Activated T-helper 1 cell treated with anti-CD3 and anti-CD28 coated beads, Interleukin-12 subunit alpha, Interleukin-12 subunit beta, Interleukin-2, Interleukin-4 antibody, amounts not matched to agents 30 ng/mL and 10 ng/mL and 1 ng/mL, durations not matched to agents 14 hours and 24 hours and 36 hours (primary cell): ENCODE measurements at regions of chr14 and their contacts with region 1.

Region 1: DNA sequence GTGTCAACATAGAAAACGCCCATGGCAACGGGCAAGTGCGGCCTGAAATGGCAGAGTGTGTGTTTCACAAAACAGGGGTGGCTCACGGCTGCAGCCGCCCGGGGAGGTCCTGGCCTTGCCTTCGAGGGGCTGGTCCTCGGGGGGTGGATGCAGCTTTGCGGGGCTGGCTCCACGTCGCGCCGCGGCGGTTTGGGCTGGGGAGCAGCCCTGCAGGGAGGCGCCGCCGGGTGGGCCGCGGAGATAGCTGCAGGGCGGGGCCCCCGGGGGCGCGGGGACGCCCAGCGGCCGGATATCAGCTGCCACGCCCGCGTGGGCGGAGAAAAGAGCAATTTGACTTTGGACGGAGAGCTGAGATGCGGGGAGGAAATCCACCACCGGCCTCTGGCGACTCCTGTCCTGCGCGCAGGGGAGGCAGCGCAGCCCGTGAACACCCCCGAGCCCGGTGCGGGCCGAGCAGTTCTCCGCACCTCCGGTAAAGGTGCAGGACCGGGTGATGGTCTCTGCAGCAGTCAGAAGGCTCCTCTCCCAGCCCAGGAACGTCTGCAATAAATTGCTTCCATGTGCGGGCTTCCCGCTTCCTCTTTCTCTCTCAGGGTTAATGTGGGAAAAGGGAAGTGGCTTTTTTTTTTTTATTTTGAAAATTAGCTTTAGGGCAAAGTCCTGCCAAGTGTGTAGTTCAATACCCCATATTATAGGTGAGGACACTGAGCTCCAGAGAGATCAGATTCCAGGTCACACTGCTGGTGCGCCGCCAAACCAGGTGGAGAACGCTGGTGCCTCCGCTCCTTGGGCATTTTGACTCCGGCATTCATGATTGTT is 110.5 kb downstream of the ARF6 start:
- DNase-seq: peak; percentile 81
- H3K4me3 Mint-ChIP-seq: peak overlapping the region; percentile 88
- H3K27ac Mint-ChIP-seq: peak overlapping the region; percentile 98
- H3K4me1 Mint-ChIP-seq: peaks cover 68% of the 10 kb centered on the region
- H3K27me3 Mint-ChIP-seq: no peaks in the 10 kb centered on the region

Region 2: DNA sequence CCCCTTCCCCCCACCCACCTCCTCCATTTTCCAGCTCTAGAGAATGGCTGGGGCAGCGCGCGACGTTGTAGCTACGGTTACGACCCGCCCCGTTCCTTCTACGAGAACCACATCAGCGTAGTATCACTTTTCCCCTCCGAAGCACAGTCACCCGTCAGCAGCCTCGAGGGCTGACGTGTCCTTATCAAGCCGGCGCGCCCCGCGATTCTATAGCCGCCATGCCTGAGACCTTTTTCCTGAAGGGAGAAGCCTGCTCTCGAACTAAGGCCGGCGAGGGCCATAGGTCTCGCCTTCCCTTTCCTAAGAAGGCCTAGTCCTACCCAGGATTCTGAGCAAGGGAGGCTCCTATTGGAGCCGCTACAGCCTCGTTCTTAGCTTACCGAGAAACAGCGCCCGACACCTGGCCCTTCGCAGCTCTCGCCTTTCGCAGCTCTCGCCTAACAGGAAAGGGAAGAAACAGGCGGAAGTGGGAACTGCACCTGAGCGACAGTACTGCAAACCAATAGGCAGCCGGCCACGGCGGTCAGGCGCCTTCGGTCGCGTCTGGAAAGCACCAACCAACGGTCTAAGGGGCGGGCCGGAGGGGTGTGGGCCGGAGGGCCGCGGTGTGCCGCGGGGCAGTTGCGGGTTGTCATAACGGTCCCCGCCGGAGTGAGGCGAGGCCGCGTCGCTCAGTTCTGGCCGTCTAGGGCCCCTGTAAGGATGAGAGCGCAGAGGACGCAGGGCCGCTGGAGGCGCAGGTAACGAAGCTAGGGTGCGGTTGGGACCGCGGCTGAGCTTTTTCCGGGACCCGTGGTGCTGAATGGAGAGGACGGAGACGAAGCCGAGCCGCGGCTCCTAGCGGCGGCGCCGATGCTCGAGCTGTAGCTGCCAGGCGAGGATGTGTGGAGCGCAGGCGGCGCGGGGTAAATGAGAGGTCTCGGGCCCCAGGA is 383.0 kb before region 1 on chr14 and contains the starts of genes MGAT2 and RPL36AL:
- intact Hi-C with region 1: loop called (anchors 5 kb)
- DNase-seq: peak; percentile 96
- H3K4me3 Mint-ChIP-seq: peak within 1 kb of the TSS; percentile 98
- H3K27ac Mint-ChIP-seq: peak within 1 kb of the TSS; percentile 98
- H3K4me1 Mint-ChIP-seq: peaks cover 53% of the 10 kb centered on the region
- H3K27me3 Mint-ChIP-seq: peaks cover 2% of the 10 kb centered on the region
- total RNA-seq, gene MGAT2: 57.5 and 58.3 TPM in 2 replicates
- total RNA-seq, gene RPL36AL: 224 and 237 TPM in 2 replicates

Region 3: GRCh38 chr14:49892636-49893308 is 110.7 kb before region 1 on chr14 and contains the start of gene ARF6:
- intact Hi-C with region 1: loop called (anchors 2 kb)
- DNase-seq: peak; percentile 97
- H3K4me3 Mint-ChIP-seq: peak within 1 kb of the TSS; percentile 99
- H3K27ac Mint-ChIP-seq: peak within 1 kb of the TSS; percentile 100
- H3K4me1 Mint-ChIP-seq: peaks cover 19% of the 10 kb centered on the region
- H3K27me3 Mint-ChIP-seq: peaks cover 2% of the 10 kb centered on the region
- total RNA-seq, gene ARF6: 163 and 164 TPM in 2 replicates

Region 4: GRCh38 chr14:49971156-49972130 is 32.0 kb before region 1 on chr14:
- intact Hi-C with region 1: loop called (anchors 1 kb)
- DNase-seq: peak; percentile 48
- H3K4me3 Mint-ChIP-seq: peak overlapping the region; percentile 83
- H3K27ac Mint-ChIP-seq: peak overlapping the region; percentile 99
- H3K4me1 Mint-ChIP-seq: peaks cover 61% of the 10 kb centered on the region
- H3K27me3 Mint-ChIP-seq: no peaks in the 10 kb centered on the region

Region 5: DNA sequence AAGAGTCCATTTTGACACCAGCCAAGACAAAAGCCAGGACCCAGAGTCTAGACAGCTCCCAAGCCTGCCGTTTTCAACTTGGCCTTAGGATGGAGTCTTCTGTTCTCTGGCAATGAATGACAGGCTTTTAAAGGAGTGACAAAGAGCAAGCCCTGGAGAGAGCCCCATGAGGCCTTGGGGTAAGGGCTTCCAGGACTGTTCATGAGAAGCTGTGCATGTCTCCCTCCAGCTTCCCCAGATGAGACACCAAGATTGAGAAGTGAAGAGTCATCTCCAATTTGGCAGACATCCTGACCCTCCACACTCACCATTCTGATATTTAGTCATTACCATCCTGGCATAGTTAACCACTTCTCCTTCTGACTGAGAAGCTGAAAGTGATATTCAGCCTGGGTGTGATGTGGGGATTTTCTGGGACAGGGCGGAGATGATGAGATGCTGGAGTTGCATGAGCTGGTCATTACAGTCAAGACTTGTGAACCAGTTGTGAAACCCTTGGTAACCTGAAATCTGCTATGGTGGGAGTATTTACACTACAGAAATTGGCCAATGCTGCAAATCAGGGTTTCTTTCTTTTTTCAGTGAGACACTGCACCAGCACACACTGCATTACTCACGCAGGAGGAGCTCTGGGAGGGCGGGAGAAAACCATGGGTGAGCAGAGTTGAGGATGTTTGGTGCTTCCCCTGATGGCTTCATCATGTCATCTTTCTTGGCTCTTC is 35.1 kb after region 1 on chr14:
- intact Hi-C with region 1: loop called (anchors 1 kb)
- DNase-seq: peak; percentile 71
- H3K4me3 Mint-ChIP-seq: peak overlapping the region; percentile 78
- H3K27ac Mint-ChIP-seq: peak overlapping the region; percentile 98
- H3K4me1 Mint-ChIP-seq: peaks cover 79% of the 10 kb centered on the region
- H3K27me3 Mint-ChIP-seq: no peaks in the 10 kb centered on the region

Region 6: DNA sequence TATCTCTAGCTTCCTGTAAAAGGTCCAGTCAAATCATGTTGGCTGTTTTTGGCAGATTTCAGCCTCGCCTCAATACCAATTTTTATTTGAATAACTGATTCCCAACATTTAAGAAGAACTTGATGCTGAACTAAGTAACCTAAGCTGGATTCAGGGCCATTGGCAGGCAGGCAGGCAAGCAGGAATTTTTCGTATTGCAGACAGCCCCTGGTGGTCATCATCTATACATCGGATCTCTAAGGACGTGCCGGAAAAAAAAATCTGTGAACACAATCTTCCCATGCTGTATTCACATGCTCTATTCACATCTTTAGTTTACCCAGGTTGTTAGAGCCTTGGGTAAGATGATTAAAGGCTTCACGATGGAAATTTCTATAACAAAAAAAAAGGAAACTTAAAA is 105.9 kb after region 1 on chr14:
- intact Hi-C with region 1: loop called (anchors 1 kb)
- DNase-seq: no peak
- H3K4me3 Mint-ChIP-seq: no peak overlapping the region
- H3K27ac Mint-ChIP-seq: no peak overlapping the region
- H3K4me1 Mint-ChIP-seq: peaks cover 28% of the 10 kb centered on the region
- H3K27me3 Mint-ChIP-seq: no peaks in the 10 kb centered on the region

Region 7: GRCh38 chr14:50321009-50321660 is 317.7 kb after region 1 on chr14:
- intact Hi-C with region 1: loop called (anchors 2 kb)
- DNase-seq: peak; percentile 68
- H3K4me3 Mint-ChIP-seq: no peak overlapping the region
- H3K27ac Mint-ChIP-seq: no peak overlapping the region
- H3K4me1 Mint-ChIP-seq: peaks cover 20% of the 10 kb centered on the region
- H3K27me3 Mint-ChIP-seq: no peaks in the 10 kb centered on the region